Activated CD4-positive, alpha-beta memory T cell treated with anti-CD3 and anti-CD28 coated beads for 36 hours (primary cell): ENCODE measurements at regions of chr4 and their contacts with region 1.

Region 1: GRCh38 chr4:77586951-77587383 is 18.7 kb upstream of the CXCL13 start:
- DNase-seq: peak; percentile 87
- H3K4me3 Mint-ChIP-seq: peak overlapping the region; percentile 33
- H3K27ac Mint-ChIP-seq: peak overlapping the region; percentile 71
- H3K4me1 Mint-ChIP-seq: peaks cover 46% of the 10 kb centered on the region
- H3K27me3 Mint-ChIP-seq: peaks cover 15% of the 10 kb centered on the region

Region 2: DNA sequence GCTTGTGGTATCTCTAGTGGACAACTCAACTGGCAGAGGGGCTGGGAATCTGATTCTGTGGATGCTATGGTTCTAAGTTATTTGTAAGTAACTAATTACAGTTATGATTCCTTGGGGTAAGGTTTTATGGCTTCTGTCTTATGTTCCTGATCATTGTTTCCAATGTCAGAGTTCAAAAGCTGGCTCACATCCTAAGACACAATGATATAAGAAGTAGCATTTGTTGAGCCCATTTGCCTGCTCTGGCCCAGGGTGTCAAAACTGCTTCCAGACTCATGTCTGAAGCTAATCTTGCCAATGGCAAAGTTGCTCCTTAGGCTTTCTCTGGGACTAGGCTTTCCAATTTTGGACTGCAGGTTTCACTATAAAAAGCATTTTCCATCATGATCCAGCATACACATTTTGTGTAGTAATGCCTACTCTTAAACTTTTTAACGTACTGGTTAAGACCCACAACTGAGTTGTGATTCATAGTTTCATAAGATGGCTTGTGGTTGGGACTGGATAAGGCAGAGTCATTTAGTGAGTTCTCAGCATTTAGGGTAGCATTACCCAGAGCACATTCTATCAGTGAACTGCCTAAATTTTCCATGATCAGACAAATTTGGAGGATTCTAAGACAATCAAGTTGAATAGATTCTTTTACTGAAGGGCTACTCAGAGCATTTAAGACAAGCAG is 561.2 kb before region 1 on chr4:
- CTCF ChIA-PET with region 1: no interaction called
- POLR2A ChIA-PET with region 1: no interaction called
- intact Hi-C with region 1: loop called (anchors 1 kb)
- DNase-seq: no peak
- H3K4me3 Mint-ChIP-seq: no peak overlapping the region
- H3K27ac Mint-ChIP-seq: peak overlapping the region; percentile 62
- H3K4me1 Mint-ChIP-seq: peaks cover 43% of the 10 kb centered on the region
- H3K27me3 Mint-ChIP-seq: no peaks in the 10 kb centered on the region

Region 3: DNA sequence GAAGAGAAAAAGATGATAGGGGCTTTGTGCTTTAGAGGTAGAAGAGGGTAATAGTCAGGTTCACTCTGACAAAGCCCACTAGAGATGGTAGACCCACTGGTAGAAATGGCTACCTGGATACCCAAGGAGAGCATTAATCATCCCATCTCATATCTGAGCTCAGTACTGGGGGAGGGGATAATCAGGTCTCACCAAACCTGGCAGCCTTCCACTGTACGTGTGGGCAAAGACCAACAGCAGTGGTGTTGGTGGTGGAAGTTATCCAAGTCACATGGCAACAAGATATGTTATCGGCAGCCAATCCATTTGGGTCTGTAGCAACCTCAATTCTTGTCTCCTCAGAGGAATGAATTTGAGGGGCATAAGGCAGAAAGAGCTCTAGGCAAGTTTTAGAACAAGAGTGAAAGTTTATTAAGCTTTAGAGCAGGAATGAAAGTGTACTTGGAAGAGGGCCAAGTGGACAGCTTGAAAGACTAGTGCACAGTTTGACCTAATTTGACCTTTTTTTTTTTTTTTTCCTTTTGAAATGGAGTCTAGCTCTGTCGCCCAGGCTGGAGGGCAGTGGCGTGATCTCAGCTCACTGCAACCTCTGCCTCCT is 48.3 kb before region 1 on chr4:
- CTCF ChIA-PET with region 1: no interaction called
- POLR2A ChIA-PET with region 1: no interaction called
- intact Hi-C with region 1: loop called (anchors 2 kb)
- DNase-seq: peak; percentile 15
- H3K4me3 Mint-ChIP-seq: no peak overlapping the region
- H3K27ac Mint-ChIP-seq: no peak overlapping the region
- H3K4me1 Mint-ChIP-seq: peaks cover 19% of the 10 kb centered on the region
- H3K27me3 Mint-ChIP-seq: peaks cover 24% of the 10 kb centered on the region

Region 4: GRCh38 chr4:77819843-77820648 is 233.1 kb after region 1 on chr4:
- CTCF ChIA-PET with region 1: no interaction called
- POLR2A ChIA-PET with region 1: no interaction called
- intact Hi-C with region 1: loop called (anchors 2 kb)
- DNase-seq: peak; percentile 97
- H3K4me3 Mint-ChIP-seq: peak overlapping the region; percentile 97
- H3K27ac Mint-ChIP-seq: peak overlapping the region; percentile 94
- H3K4me1 Mint-ChIP-seq: peaks cover 47% of the 10 kb centered on the region
- H3K27me3 Mint-ChIP-seq: peaks cover 2% of the 10 kb centered on the region

Region 5: GRCh38 chr4:77911091-77911490 is 324.1 kb after region 1 on chr4:
- CTCF ChIA-PET with region 1: no interaction called
- POLR2A ChIA-PET with region 1: no interaction called
- intact Hi-C with region 1: no loop called
- DNase-seq: no peak
- H3K4me3 Mint-ChIP-seq: no peak overlapping the region
- H3K27ac Mint-ChIP-seq: no peak overlapping the region
- H3K4me1 Mint-ChIP-seq: no peaks in the 10 kb centered on the region
- H3K27me3 Mint-ChIP-seq: no peaks in the 10 kb centered on the region

Region 6: GRCh38 chr4:78656968-78657445 is 1070.0 kb after region 1 on chr4:
- CTCF ChIA-PET with region 1: no interaction called
- POLR2A ChIA-PET with region 1: no interaction called
- intact Hi-C with region 1: loop called (anchors 5 kb)
- DNase-seq: peak; percentile 25
- H3K4me3 Mint-ChIP-seq: peak overlapping the region; percentile 28
- H3K27ac Mint-ChIP-seq: peak overlapping the region; percentile 19
- H3K4me1 Mint-ChIP-seq: peaks cover 30% of the 10 kb centered on the region
- H3K27me3 Mint-ChIP-seq: peaks cover 2% of the 10 kb centered on the region